ENCODE measurements at regions of chr20 and their contacts with region 1.

Region 1: GRCh38 chr20:46057856-46058598 is 29.0 kb downstream of the SLC12A5 start:
- DNase-seq: no peak
- H3K4me3 ChIP-seq: peak overlapping the region; percentile 48
- CTCF ChIP-seq: peak; percentile 46

Region 2: DNA sequence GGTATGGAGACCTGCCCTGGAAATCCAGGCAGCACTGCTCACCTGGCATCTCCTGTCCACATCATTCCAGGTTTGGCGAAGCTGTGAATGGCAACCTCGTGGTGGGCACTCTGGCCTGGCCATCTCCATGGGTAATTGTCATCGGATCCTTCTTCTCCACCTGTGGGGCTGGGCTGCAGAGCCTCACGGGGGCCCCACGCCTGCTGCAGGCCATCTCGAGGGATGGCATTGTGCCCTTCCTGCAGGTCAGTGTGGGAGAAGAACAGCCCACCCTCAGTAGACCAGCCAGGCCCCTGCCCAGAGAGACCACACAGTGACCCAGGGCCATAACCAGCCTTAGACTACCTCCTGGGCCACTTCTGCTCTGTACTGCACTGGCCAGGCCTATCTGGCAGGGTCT is 13.1 kb before region 1 on chr20:
- CTCF ChIA-PET with region 1: interaction called, 10 read pairs
- POLR2A ChIA-PET with region 1: no interaction called
- DNase-seq: no peak
- H3K4me3 ChIP-seq: no peak overlapping the region
- CTCF ChIP-seq: no peak

Region 3: DNA sequence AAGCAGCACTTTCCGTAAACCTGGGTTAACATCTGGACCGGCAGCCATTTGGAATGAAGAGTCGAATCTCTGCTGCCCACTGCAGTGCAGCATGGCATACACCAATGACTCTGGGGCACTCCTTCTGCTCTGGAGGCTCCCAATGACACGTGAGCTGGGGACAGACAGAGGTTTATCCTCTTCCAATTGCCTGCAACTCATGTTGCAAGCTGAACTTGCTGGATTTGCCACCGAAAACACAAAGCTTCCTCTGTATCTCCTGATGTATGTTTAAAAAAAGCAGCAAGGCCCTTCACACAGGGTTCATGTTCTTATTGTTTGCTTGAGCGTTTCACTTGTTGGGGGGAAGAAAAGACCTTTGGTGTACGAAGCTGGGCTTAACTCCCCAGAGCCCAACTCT is 20.9 kb after region 1 on chr20:
- CTCF ChIA-PET with region 1: interaction called, 13 read pairs
- POLR2A ChIA-PET with region 1: interaction called, 4 read pairs
- DNase-seq: no peak
- H3K4me3 ChIP-seq: no peak overlapping the region
- CTCF ChIP-seq: no peak

Region 4: GRCh38 chr20:46283426-46284039 is 225.5 kb after region 1 on chr20:
- CTCF ChIA-PET with region 1: no interaction called
- POLR2A ChIA-PET with region 1: no interaction called
- DNase-seq: no peak
- H3K4me3 ChIP-seq: no peak overlapping the region
- CTCF ChIP-seq: no peak

Measured in AG04449 (cell line).